Posterior vena cava (tissue), 2 donors: ENCODE measurements at regions of chr6 and their contacts with region 1.

Region 1: DNA sequence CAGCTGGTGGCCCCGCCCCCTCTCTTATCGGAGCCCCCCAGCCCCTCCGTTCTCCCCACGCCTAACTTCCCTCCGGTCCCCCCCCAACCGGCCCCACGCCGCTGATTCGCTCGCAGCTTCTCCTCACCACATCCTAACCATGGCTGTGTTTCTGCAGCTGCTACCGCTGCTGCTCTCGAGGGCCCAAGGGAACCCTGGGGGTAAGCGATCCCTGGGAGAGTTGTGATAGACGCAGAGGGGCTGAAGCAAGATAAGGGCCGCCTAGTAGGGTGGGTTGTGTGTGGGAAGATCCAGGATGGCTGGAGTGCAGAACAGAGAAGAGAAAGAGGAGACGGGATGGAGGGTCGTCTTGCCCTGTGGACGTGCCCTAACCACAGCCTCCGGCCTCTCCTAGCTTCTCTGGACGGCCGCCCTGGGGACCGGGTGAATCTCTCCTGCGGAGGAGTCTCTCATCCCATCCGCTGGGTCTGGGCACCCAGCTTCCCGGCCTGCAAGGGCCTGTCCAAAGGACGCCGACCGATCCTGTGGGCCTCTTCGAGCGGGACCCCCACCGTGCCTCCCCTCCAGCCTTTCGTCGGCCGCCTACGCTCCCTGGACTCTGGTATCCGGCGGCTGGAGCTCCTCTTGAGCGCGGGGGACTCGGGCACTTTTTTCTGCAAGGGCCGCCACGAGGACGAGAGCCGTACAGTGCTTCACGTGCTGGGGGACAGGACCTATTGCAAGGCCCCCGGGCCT is at the start of gene MPIG6B:
- DNase-seq: no peak
- total RNA-seq, gene MPIG6B: 0.52 to 1.1 TPM

Region 2: DNA sequence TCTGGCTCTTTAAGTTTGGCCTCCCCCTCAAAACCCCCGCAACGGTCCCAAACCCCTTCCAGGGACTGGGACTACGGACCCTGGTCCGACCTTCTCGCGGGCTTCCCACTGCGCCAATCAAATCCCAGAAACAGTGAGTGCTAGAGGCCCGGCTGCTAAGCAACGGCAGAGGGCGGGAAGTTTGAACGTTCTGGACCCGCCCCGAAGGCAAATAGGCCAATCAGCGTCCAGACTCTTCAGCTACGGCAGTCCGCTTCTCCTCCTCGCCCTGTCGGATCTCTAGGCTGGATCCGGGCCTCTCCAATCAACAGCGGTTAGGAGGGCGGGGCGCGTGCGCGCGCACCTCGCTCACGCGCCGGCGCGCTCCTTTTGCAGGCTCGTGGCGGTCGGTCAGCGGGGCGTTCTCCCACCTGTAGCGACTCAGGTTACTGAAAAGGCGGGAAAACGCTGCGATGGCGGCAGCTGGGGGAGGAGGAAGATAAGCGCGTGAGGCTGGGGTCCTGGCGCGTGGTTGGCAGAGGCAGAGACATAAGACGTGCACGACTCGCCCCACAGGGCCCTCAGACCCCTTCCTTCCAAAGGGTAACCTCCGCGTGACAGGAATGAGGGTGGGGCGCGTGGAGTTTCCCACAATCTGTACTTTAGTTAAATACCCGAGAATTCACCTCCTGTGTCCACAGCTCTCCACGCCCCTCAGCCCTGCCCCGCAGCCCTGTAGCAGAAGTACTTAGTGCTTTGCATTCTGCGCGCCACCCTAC is 16.4 kb after region 1 on chr6 and contains the start of gene MSH5:
- intact Hi-C with region 1: no loop called
- DNase-seq: peak; percentile 99
- total RNA-seq, gene MSH5: 7.7 to 9.8 TPM

Region 3: DNA sequence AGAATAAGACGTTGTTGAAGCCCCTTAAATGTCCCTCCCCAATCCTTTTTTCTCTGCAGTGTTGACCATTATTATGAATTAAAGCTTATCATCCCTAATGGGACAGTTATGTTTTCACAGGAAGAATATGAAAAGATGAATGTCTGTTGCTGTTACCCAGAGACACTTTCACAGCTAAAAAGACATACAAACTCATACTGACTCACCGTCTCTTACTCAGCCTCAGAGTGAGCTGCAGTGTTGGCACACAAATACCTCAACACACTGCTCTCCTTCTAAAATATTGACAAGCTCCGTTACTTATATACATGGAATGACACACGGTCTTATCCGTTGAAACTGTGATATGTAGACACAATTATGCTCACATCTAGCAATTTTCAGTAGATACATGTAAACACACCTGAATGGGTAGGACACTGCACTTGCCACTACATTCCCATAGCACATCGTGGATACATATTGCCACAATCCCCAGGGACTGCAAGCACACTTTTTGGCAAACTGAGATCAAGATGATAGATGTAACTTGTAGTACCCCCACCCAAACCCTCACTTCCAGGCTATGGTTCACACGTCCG is 29.4 kb after region 1 on chr6:
- intact Hi-C with region 1: loop called in 1 of 2 experiments (anchors 1 kb)
- DNase-seq: no peak